ENCODE measurements at regions of chr4 and their contacts with region 1.

Region 1: DNA sequence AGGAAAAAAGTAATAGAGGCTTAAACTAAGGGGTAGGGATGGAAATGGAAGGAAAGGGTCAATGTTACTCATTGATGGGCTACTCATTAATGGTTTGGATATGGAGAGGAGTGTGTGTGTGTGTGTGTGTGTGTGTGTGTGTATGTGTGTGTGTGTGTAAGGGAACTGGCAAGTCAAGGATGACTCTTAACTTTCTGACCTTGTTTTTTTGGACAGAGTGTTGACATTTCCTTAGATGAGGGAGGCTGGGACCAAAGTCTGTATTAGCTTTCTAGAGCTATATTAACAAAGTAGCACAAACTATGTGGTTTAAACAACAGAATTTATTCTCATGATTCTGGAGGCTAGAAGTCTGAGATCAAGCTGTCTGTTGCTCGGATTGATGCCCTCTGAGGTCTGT is 202.7 kb downstream of the GBA3 start:
- DNase-seq: no peak
- ATAC-seq: no peak
- H3K4me3 ChIP-seq: no peak overlapping the region
- H3K27ac ChIP-seq: no peak overlapping the region
- H3K4me1 ChIP-seq: no peaks in the 10 kb centered on the region
- H3K27me3 ChIP-seq: no peaks in the 10 kb centered on the region
- CTCF ChIP-seq: no peak

Region 2: GRCh38 chr4:21177092-21177491 is 1718.4 kb before region 1 on chr4:
- CTCF ChIA-PET with region 1: interaction called, 10 read pairs
- POLR2A ChIA-PET with region 1: no interaction called
- in situ Hi-C with region 1: no loop called
- intact Hi-C with region 1: no loop called
- DNase-seq: no peak
- ATAC-seq: no peak
- H3K4me3 ChIP-seq: no peak overlapping the region
- H3K27ac ChIP-seq: no peak overlapping the region
- H3K4me1 ChIP-seq: no peaks in the 10 kb centered on the region
- H3K27me3 ChIP-seq: no peaks in the 10 kb centered on the region
- CTCF ChIP-seq: no peak

Region 3: GRCh38 chr4:22574424-22574823 is 321.1 kb before region 1 on chr4:
- CTCF ChIA-PET with region 1: no interaction called
- POLR2A ChIA-PET with region 1: no interaction called
- in situ Hi-C with region 1: no loop called
- intact Hi-C with region 1: no loop called
- DNase-seq: no peak
- ATAC-seq: no peak
- H3K4me3 ChIP-seq: no peak overlapping the region
- H3K27ac ChIP-seq: no peak overlapping the region
- H3K4me1 ChIP-seq: no peaks in the 10 kb centered on the region
- H3K27me3 ChIP-seq: no peaks in the 10 kb centered on the region
- CTCF ChIP-seq: no peak

Measured in Panc1 (cell line).